Prostate gland (tissue), 2 donors: ENCODE measurements at regions of chr1 and their contacts with region 1.

Region 1: GRCh38 chr1:162497723-162498500 is at the start of gene UHMK1:
- DNase-seq: peak; percentile 90
- H3K4me3 ChIP-seq: peak within 1 kb of the TSS; percentile 75 to 98
- H3K27ac ChIP-seq: peak within 1 kb of the TSS; percentile 84 to 90
- H3K4me1 ChIP-seq: peaks cover 5% of the 10 kb centered on the region
- H3K27me3 ChIP-seq: no peaks in the 10 kb centered on the region
- CTCF ChIP-seq: no peak
- POLR2A ChIP-seq: peak; percentile 70
- total RNA-seq, gene UHMK1: 34.7 to 47.0 TPM

Region 2: DNA sequence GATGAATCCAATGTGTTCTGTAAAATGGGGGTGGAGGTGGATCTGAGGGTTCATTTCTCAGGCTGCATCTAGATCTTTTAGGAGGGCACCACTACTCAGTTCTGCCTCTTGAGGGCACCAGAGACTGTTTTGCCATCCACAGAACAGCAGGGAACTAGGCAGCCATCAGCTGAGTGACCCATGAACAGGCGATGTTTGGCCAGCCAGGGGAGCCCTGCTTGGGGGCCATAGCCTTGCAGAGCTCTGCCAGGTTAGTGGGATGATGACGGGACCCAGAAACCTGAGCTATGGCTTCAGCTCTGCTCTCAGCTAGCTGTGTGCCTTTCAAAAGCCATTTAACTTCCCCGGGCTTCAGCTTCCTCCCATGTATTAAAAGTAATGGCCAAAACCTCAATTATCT is 441.9 kb before region 1 on chr1:
- intact Hi-C with region 1: loop called (anchors 5 kb)
- DNase-seq: peak; percentile 66
- H3K4me3 ChIP-seq: no peak overlapping the region
- H3K27ac ChIP-seq: no peak overlapping the region
- H3K4me1 ChIP-seq: no peaks in the 10 kb centered on the region
- H3K27me3 ChIP-seq: no peaks in the 10 kb centered on the region
- CTCF ChIP-seq: peak; percentile 72 to 89 (median 84)
- POLR2A ChIP-seq: no peak

Region 3: GRCh38 chr1:162335126-162335525 is 162.8 kb before region 1 on chr1:
- intact Hi-C with region 1: no loop called
- DNase-seq: no peak
- H3K4me3 ChIP-seq: no peak overlapping the region
- H3K27ac ChIP-seq: no peak overlapping the region
- H3K4me1 ChIP-seq: no peaks in the 10 kb centered on the region
- H3K27me3 ChIP-seq: no peaks in the 10 kb centered on the region
- CTCF ChIP-seq: no peak
- POLR2A ChIP-seq: no peak

Region 4: GRCh38 chr1:162550925-162551324 is 53.0 kb after region 1 on chr1:
- intact Hi-C with region 1: no loop called
- DNase-seq: no peak
- H3K4me3 ChIP-seq: no peak overlapping the region
- H3K27ac ChIP-seq: no peak overlapping the region
- H3K4me1 ChIP-seq: no peaks in the 10 kb centered on the region
- H3K27me3 ChIP-seq: no peaks in the 10 kb centered on the region
- CTCF ChIP-seq: no peak
- POLR2A ChIP-seq: no peak

Region 5: DNA sequence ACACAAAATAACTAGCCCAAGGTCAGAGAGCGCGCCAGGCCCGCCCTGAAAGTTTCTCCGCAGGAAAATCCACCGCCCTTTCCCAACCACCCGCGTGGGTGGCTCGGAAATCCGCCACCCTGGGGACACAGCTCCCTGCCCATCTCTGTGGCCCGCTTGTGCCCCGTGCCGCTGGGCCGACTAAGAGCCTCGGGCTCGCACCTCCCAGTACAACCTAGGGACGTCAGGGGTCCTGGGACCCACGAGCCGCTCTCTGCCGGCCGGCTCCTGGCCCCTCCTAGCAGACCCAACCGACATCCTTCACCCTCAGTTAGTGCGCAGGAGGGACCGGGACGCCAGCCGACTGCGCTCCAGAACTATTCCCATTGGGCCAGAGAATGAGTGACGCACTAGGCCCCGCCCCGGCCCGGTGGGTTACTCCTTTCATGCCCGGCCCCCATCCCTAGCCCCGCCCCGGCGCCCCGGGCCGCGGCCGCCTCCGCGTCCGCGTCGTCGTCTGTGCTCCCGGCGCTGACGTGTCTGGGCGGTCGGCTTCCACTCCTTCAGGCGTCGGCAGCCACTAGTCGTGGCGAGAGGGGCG is 63.2 kb after region 1 on chr1:
- intact Hi-C with region 1: loop called (anchors 5 kb)
- DNase-seq: peak; percentile 98
- H3K4me3 ChIP-seq: peak overlapping the region; percentile 83 to 90
- H3K27ac ChIP-seq: peak overlapping the region; percentile 96 to 97
- H3K4me1 ChIP-seq: no peaks in the 10 kb centered on the region
- H3K27me3 ChIP-seq: no peaks in the 10 kb centered on the region
- CTCF ChIP-seq: peak in 1 of 4 experiments; percentile 0
- POLR2A ChIP-seq: peak; percentile 85